Vagina (tissue), 2 donors: ENCODE measurements at regions of chr20 and their contacts with region 1.

Region 1: DNA sequence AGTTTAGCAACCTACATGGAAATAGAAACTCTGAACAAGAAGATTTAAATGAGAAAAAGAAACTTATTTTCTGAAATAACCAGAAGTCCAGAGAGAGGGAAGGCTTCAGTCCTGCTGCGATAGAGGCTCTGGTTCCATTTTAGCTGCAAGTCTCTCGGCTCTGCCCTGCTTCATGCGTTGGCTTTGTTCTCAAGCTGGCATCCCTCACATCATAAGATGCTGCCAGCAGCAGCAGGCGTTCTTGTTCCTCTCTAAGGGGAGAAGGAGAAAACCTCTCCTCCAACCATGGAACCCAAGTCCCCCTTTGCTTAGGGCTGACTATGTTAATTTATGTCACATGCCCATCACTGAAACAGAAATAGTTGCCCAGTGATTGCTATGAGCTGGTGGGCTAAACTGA is 46.4 kb upstream of the PMEPA1 start:
- DNase-seq: no peak
- H3K4me3 ChIP-seq: no peak overlapping the region
- H3K27ac ChIP-seq: no peak overlapping the region
- H3K4me1 ChIP-seq: no peaks in the 10 kb centered on the region
- H3K27me3 ChIP-seq: no peaks in the 10 kb centered on the region
- CTCF ChIP-seq: no peak
- POLR2A ChIP-seq: no peak

Region 2: GRCh38 chr20:56380375-56380774 is 1375.8 kb before region 1 on chr20:
- intact Hi-C with region 1: no loop called
- DNase-seq: no peak
- H3K4me3 ChIP-seq: no peak overlapping the region
- H3K27ac ChIP-seq: no peak overlapping the region
- H3K4me1 ChIP-seq: no peaks in the 10 kb centered on the region
- H3K27me3 ChIP-seq: no peaks in the 10 kb centered on the region
- CTCF ChIP-seq: no peak
- POLR2A ChIP-seq: no peak

Region 3: GRCh38 chr20:57809596-57810172 is 53.5 kb after region 1 on chr20:
- intact Hi-C with region 1: loop called (anchors 5 kb)
- DNase-seq: no peak
- H3K4me3 ChIP-seq: no peak overlapping the region
- H3K27ac ChIP-seq: no peak overlapping the region
- H3K4me1 ChIP-seq: peaks cover 3% of the 10 kb centered on the region
- H3K27me3 ChIP-seq: no peaks in the 10 kb centered on the region
- CTCF ChIP-seq: no peak
- POLR2A ChIP-seq: no peak